ENCODE measurements at regions of chr3 and their contacts with region 1.

Region 1: DNA sequence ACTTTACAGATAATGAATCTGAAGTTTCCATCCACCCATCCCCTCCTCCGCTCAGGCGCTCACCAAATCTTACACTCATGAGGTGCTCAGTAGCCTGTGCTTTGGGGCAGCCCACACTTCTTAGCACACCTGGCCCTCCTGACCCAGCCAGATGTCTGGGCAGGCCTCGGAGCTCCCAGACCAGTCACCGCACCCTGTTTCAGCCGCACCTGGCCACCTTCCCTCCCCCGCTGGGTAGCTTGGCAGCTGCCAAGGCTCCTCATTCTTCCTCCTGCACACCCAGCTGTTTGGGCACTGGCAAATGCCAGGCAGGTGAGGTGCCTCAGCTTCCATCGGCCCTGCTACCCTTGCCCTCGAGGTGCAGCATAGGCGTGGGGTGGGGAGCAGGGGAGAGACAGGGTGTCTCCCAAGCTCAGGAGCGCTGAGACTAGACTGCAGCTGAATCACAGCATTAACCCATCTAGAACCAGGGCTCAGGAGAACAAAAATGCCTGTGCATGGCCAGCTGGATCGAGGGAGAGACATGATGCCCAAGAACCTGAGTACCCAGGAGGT is 45.8 kb downstream of the CDC25A start:
- DNase-seq: peak in 1 of 2 donors; percentile 21
- H3K4me3 ChIP-seq: no peak overlapping the region
- CTCF ChIP-seq: no peak
- POLR2A ChIP-seq: no peak

Region 2: GRCh38 chr3:47989981-47990440 is 152.4 kb before region 1 on chr3:
- intact Hi-C with region 1: no loop called
- DNase-seq: peak; percentile 84 to 92
- H3K4me3 ChIP-seq: no peak overlapping the region
- CTCF ChIP-seq: peak in 1 of 3 donors; percentile 46
- POLR2A ChIP-seq: no peak

Region 3: GRCh38 chr3:48001991-48002390 is 140.4 kb before region 1 on chr3:
- intact Hi-C with region 1: loop called (anchors 10 kb)
- DNase-seq: no peak
- H3K4me3 ChIP-seq: no peak overlapping the region
- CTCF ChIP-seq: no peak
- POLR2A ChIP-seq: no peak

Region 4: GRCh38 chr3:48820612-48821324 is 678.4 kb after region 1 on chr3:
- intact Hi-C with region 1: no loop called
- DNase-seq: no peak
- H3K4me3 ChIP-seq: no peak overlapping the region
- CTCF ChIP-seq: no peak
- POLR2A ChIP-seq: no peak

Region 5: GRCh38 chr3:49213541-49213943 is 1071.1 kb after region 1 on chr3:
- intact Hi-C with region 1: no loop called
- DNase-seq: no peak
- H3K4me3 ChIP-seq: no peak overlapping the region
- CTCF ChIP-seq: no peak
- POLR2A ChIP-seq: no peak